ENCODE measurements at regions of chr3 and their contacts with region 1.

Region 1: DNA sequence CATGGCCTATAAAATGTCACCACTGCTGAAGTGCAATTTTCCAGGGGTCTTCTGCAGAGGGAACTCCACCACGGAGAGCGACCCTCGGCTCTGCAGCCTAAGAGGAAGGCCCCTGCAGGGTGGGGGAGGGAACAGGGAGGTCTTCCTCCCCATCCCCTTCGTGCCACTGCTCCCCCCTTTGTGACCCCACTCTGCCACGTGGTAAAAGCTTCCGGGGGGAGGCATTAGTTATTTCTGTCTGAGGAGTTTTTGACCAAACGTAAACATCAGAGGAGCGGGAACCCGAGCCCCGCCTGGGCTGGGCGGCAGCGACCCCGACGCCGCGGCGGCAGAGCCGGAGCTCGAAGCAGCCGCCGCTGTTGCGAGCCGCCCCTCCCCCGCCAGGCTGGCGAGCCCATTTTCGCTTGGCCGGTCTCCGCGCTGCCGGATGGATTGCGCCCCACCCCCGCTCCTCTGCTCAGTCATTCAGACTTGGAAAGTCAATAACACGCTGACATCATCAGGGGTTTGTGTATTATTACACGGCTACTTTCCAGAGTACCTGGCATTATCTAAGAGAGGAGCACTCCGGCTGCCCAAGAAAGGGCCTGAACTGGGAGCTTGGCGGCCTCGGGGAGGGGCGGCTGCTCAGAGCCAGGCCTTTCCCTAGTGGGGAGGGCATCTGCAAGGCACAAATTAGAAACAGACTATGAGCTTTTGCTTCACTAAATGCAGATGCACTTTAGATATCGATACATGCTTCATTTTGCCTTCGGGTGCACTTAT is 162.5 kb upstream of the TBL1XR1 start:
- DNase-seq: peak; percentile 91 to 95 (median 93)
- H3K4me3 ChIP-seq: peak overlapping the region; percentile 56 to 77 (median 66)
- H3K4me3 Mint-ChIP-seq: peak overlapping the region; percentile 79 to 92
- H3K27ac ChIP-seq: peak overlapping the region; percentile 87 to 89
- H3K27ac Mint-ChIP-seq: peak overlapping the region; percentile 95 to 99 (median 98)
- H3K4me1 ChIP-seq: peaks cover 49 to 59% of the 10 kb centered on the region in 2 donors
- H3K4me1 Mint-ChIP-seq: peaks cover 54% of the 10 kb centered on the region
- H3K27me3 ChIP-seq: no peaks in the 10 kb centered on the region
- H3K27me3 Mint-ChIP-seq: peaks cover 0 to 4% (median 0%) of the 10 kb centered on the region in 3 donors
- CTCF ChIP-seq: no peak

Region 2: GRCh38 chr3:177251755-177252154 is 108.0 kb before region 1 on chr3:
- intact Hi-C with region 1: loop called in 1 of 2 experiments (anchors 5 kb)
- DNase-seq: peak; percentile 60 to 82 (median 76)
- H3K4me3 ChIP-seq: no peak overlapping the region
- H3K4me3 Mint-ChIP-seq: peak overlapping the region in 1 of 2 donors; percentile 58
- H3K27ac ChIP-seq: peak overlapping the region in 1 of 2 donors; percentile 15
- H3K27ac Mint-ChIP-seq: peak overlapping the region in 6 of 7 donors; percentile 56 to 70 (median 64)
- H3K4me1 ChIP-seq: peaks cover 13 to 17% of the 10 kb centered on the region in 2 donors
- H3K4me1 Mint-ChIP-seq: peaks cover 19% of the 10 kb centered on the region
- H3K27me3 ChIP-seq: no peaks in the 10 kb centered on the region
- H3K27me3 Mint-ChIP-seq: peaks cover 0 to 3% (median 0%) of the 10 kb centered on the region in 3 donors
- CTCF ChIP-seq: no peak

Region 3: DNA sequence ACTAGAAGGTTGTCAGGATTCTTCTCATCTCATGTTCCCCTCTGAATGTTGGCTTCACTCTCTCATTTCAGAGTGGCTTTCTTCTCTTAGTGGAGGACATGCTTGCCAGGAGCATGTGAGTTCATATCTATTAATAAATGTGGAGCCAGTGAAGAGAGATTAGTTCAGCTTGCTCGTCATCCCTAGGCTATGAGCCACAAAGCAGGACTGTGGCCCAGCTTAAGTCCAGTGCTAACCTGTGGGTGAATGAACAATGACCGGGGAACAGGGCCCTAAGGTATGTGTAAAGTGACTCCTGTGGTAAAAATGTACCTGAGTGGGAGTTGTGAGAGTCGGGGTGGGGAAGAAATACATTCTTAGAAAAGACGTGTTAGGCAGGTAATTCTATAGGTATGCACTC is 65.6 kb before region 1 on chr3:
- intact Hi-C with region 1: loop called (anchors 5 to 10 kb)
- DNase-seq: no peak
- H3K4me3 ChIP-seq: no peak overlapping the region
- H3K4me3 Mint-ChIP-seq: no peak overlapping the region
- H3K27ac ChIP-seq: no peak overlapping the region
- H3K27ac Mint-ChIP-seq: no peak overlapping the region
- H3K4me1 ChIP-seq: peaks cover 16% of the 10 kb centered on the region in 2 donors
- H3K4me1 Mint-ChIP-seq: peaks cover 19% of the 10 kb centered on the region
- H3K27me3 ChIP-seq: no peaks in the 10 kb centered on the region
- H3K27me3 Mint-ChIP-seq: peaks cover 0 to 5% (median 2%) of the 10 kb centered on the region in 3 donors
- CTCF ChIP-seq: no peak

Region 4: DNA sequence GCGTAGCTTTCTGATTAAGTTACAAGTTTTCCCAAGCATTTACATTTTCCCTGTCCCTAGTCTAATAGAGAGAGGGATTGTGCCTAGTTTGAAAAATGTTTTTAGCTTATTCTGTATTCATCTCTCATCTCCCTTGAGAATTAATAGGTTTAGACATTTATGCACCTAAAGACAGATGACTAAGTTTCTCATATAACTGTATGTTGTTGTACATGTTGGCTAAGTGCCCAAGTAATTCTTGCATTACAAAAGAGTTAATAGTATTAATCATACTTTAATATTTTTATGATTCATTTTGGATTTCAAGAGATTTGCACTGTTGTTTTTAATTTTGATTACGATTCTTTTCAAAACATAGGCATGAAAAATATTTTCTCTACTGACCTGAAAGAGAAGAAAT is 53.5 kb before region 1 on chr3:
- intact Hi-C with region 1: no loop called
- DNase-seq: no peak
- H3K4me3 ChIP-seq: no peak overlapping the region
- H3K4me3 Mint-ChIP-seq: no peak overlapping the region
- H3K27ac ChIP-seq: no peak overlapping the region
- H3K27ac Mint-ChIP-seq: no peak overlapping the region
- H3K4me1 ChIP-seq: no peaks in the 10 kb centered on the region
- H3K4me1 Mint-ChIP-seq: no peaks in the 10 kb centered on the region
- H3K27me3 ChIP-seq: no peaks in the 10 kb centered on the region
- H3K27me3 Mint-ChIP-seq: peaks cover 0 to 3% (median 0%) of the 10 kb centered on the region in 3 donors
- CTCF ChIP-seq: no peak

Region 5: DNA sequence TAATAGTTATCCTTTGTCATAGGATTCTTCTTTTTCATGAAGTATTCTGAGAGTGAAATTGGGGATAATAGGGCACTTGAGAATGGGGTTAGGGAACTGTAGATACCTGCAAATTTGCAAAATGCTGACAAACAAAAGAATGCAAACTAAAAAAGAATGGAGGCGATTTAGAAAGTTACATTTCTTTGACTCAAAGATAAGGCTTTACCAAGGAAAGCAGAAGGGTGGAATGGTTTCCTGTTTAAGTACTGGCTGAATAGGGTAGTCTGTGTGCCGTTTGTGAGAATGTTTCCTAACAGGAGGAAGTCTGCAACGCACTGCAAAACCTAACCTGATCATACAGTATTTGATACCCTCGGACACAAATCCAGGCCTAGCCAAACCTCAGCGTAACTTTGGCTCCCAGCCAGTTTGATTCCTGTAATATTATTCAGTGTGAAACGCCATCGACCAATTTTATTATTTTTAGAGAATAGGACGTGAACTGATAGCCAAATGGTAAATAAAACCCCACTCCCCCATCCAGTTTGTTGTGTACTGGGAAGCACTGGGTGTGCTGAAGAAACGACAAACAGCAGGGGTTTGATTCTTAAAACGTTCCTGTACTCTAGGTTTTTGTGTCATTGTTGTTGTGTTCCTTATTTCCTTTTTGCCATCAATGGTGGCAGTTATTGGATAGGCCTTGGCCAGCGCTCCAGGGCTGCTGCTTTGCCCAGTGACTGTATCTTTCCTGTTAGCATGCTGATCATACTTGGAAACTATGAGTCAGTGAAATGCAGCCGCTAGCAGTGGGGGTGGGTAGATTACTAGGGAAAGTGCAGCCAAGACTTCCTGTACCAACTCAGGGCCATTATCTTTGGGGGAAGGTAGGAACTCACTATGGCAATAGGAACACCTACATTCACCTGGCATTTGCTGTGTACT is 14.5 kb before region 1 on chr3:
- intact Hi-C with region 1: loop called in 1 of 2 experiments (anchors 2 kb)
- DNase-seq: peak; percentile 79 to 92 (median 86)
- H3K4me3 ChIP-seq: peak overlapping the region in 1 of 3 experiments; percentile 25
- H3K4me3 Mint-ChIP-seq: peak overlapping the region in 1 of 2 donors; percentile 58
- H3K27ac ChIP-seq: peak overlapping the region; percentile 23 to 80
- H3K27ac Mint-ChIP-seq: peak overlapping the region; percentile 86 to 95 (median 92)
- H3K4me1 ChIP-seq: peaks cover 24 to 29% of the 10 kb centered on the region in 2 donors
- H3K4me1 Mint-ChIP-seq: peaks cover 40% of the 10 kb centered on the region
- H3K27me3 ChIP-seq: no peaks in the 10 kb centered on the region
- H3K27me3 Mint-ChIP-seq: peaks cover 0 to 2% (median 0%) of the 10 kb centered on the region in 3 donors
- CTCF ChIP-seq: no peak

Region 6: DNA sequence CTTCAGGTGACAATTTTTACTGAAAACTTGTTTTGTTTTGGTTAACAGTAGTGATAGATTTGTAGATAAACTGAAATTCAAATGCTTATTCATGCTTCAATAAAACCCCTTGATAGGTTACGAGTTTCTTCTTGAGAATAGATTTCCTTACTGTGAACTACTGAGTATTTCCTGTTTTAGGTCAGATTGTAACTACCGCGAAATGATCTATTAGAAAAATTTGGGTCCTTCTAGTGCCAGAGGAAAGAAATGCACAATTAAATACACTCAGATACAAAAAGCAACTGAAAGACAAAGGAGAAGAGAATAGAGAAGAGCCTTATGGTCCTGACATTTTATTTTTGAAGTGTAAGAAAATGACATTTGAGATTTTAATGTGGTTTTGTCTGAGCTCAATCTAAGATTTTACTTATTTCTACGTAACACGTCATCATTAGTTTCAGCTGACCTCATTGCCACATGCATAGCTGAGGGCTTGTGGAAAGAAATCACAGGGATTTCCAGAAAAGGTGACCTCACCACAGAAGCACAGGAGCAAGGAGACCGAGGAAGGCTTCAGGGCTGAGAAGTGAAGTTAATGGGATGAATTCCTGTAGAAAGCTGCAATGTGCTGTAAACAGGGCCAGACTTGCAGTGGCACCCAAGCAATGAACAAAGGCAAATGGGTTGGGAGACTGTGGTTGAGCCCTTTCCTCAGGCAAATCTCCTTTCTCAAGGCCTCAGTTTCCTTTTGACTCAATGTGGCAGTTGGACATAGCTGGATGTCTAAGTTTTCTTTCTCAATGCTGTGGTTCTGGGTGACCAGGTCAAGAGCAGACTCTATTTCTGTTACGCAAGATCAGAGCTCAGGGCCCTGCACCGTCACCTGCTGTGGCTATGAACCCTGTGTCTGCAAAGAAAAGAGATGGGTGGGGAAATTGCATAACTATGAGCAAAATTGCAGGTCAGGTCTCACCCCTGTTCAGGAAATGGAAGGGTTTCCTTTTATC is 89.5 kb after region 1 on chr3:
- intact Hi-C with region 1: loop called in 1 of 2 experiments (anchors 2 kb)
- DNase-seq: peak; percentile 68 to 93 (median 82)
- H3K4me3 ChIP-seq: peak overlapping the region in 1 of 3 experiments; percentile 17
- H3K4me3 Mint-ChIP-seq: peak overlapping the region in 1 of 2 donors; percentile 81
- H3K27ac ChIP-seq: peak overlapping the region; percentile 24 to 62
- H3K27ac Mint-ChIP-seq: peak overlapping the region; percentile 83 to 94 (median 86)
- H3K4me1 ChIP-seq: peaks cover 64 to 81% of the 10 kb centered on the region in 2 donors
- H3K4me1 Mint-ChIP-seq: peaks cover 28% of the 10 kb centered on the region
- H3K27me3 ChIP-seq: no peaks in the 10 kb centered on the region
- H3K27me3 Mint-ChIP-seq: no peaks in the 10 kb centered on the region
- CTCF ChIP-seq: no peak

Region 7: DNA sequence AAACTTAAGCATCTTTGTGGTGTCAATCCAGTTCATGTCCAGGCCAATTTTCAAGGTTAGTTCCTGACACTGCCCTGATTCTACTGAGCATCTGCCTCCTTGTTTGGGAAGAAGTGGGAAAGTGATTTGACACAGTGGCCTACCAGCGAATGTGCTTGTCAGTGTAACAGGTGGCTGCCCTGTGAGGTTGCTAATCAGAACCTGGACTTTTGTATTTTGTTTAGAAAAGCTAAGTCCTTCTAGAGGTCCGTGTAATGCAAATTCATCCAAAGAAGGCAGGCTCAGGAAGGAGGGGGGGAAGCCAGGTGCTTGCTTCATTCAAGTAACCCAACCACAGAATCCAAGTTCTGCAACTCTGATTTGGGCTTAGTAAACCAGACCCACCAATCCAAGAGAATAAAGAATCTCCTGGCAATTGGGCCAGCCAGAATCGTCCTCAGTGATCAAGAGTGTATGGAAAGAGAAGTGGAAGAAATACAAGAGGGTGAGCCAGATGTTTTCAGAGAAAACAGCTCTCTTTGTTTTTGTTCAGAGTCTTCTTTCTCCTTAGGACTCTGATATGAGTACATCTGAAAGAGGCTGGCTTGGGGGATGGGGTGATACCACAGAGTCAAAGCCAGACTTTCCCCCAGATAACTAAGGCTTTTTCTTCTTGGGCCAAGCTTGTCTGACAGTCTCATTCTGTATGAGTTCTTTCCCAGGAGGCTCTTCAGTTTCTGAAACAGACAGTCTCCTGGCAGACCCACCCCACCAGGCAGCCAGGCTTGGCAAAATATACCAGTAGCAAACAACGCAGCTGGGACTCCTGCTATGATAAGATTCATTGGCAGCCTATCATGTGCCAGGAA is 346.4 kb after region 1 on chr3:
- intact Hi-C with region 1: no loop called
- DNase-seq: no peak
- H3K4me3 ChIP-seq: no peak overlapping the region
- H3K4me3 Mint-ChIP-seq: no peak overlapping the region
- H3K27ac ChIP-seq: no peak overlapping the region
- H3K27ac Mint-ChIP-seq: no peak overlapping the region
- H3K4me1 ChIP-seq: no peaks in the 10 kb centered on the region
- H3K4me1 Mint-ChIP-seq: peaks cover 2% of the 10 kb centered on the region
- H3K27me3 ChIP-seq: no peaks in the 10 kb centered on the region
- H3K27me3 Mint-ChIP-seq: peaks cover 0 to 2% (median 0%) of the 10 kb centered on the region in 3 donors
- CTCF ChIP-seq: no peak

Region 8: GRCh38 chr3:177777699-177778098 is 417.9 kb after region 1 on chr3:
- intact Hi-C with region 1: loop called in 1 of 2 experiments (anchors 10 kb)
- DNase-seq: peak; percentile 30 to 42 (median 41)
- H3K4me3 ChIP-seq: no peak overlapping the region
- H3K4me3 Mint-ChIP-seq: no peak overlapping the region
- H3K27ac ChIP-seq: no peak overlapping the region
- H3K27ac Mint-ChIP-seq: peak overlapping the region in 1 of 7 donors; percentile 40
- H3K4me1 ChIP-seq: peaks cover 40 to 51% of the 10 kb centered on the region in 2 donors
- H3K4me1 Mint-ChIP-seq: peaks cover 58% of the 10 kb centered on the region
- H3K27me3 ChIP-seq: no peaks in the 10 kb centered on the region
- H3K27me3 Mint-ChIP-seq: peaks cover 0 to 3% (median 0%) of the 10 kb centered on the region in 3 donors
- CTCF ChIP-seq: peak; percentile 68

Measured in CD14-positive monocyte (primary cell).